ENCODE measurements at regions of chr2 and their contacts with region 1.

Region 1: GRCh38 chr2:112906276-112906675 is 4.7 kb upstream of the IL37 start:
- DNase-seq: no peak
- ATAC-seq: peak; percentile 32; the same call in 1 of the 3 replicates
- H3K4me3 ChIP-seq: no peak overlapping the region
- H3K27ac ChIP-seq: no peak overlapping the region
- H3K4me1 ChIP-seq: no peaks in the 10 kb centered on the region
- H3K27me3 ChIP-seq: no peaks in the 10 kb centered on the region
- CTCF ChIP-seq: no peak
- EP300 ChIP-seq: no peak
- POLR2A ChIP-seq: no peak
- RAD21 ChIP-seq: no peak

Region 2: DNA sequence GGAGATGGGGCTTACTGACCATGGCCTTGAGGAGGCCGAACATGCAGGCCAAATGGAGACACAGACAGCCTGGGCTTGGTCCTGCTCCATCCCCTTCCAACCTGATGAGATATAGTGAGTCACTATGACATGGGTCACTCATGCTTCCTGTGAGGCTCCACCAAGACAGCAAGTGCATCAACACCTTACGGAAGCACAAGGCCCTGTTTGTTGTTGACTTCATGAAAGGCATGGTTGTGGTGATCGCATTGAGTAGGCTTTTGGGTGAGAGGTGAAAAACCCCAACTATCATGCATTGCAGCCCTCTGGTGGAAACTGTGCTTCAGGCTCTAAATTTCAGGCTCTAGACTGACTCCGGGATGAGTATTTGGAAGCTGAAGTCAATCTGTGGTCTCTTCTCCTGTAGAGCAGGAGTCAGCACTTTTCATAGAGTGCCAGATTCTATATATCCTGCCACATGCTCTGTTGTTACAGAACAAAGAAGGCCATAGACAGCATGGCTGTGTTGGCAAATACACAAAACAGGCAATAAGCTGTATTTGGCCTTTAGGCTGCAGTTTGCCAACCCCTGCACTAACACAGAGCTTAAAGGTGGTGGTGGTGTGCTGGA is 14.8 kb after region 1 on chr2:
- CTCF ChIA-PET with region 1: interaction called, 3 read pairs
- POLR2A ChIA-PET with region 1: no interaction called
- RAD21 ChIA-PET with region 1: no interaction called
- SMC1A ChIA-PET with region 1: interaction called, 17 read pairs
- in situ Hi-C with region 1: no loop called
- intact Hi-C with region 1: no loop called
- DNase-seq: no peak
- ATAC-seq: no peak
- H3K4me3 ChIP-seq: no peak overlapping the region
- H3K27ac ChIP-seq: no peak overlapping the region
- H3K4me1 ChIP-seq: peaks cover 5% of the 10 kb centered on the region
- H3K27me3 ChIP-seq: peaks cover 2 to 3% of the 10 kb centered on the region in 2 experiments; a peak in 2 of 4 replicates
- CTCF ChIP-seq: no peak
- EP300 ChIP-seq: no peak
- POLR2A ChIP-seq: no peak
- RAD21 ChIP-seq: no peak

Region 3: DNA sequence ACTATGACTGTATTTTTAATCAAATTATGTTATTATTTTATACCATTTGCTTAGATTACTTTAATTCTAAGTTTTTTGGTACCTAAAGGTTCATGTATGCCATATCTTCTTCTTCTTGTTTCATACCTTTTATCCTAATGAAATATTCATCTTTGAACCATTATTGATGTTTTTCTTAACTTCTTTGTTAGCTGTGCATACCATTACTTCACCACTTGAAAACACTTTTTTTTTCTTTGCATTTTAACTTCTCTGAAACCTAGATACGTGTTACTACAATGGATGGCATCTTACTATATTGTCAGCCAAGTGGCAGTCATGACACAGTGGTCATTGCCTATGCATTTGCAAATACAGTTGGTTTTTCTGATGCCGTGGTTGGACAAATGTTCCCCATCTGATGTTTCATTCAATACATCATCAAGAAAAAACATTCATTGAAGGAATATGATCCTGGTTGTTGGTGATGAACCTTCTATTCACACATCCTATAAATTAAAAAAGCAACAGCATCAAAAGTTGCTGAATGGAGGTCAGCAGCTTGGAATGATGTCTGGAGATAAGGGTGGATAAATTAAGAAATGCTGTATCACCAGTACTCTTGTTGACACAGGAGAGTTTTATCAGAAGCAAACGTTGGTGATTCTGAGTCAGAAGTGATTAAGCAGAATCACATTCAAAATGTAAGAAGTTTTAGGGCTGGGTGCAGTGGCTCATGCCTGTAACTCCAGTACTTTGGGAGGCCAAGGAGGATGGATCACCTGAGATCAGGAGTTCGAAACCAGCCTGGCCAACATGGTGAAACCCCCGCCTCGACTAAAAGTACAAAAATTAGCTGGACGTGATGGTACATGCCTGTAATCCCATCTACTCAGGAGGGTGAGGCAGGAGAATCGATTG is 106.4 kb after region 1 on chr2:
- CTCF ChIA-PET with region 1: no interaction called
- POLR2A ChIA-PET with region 1: no interaction called
- RAD21 ChIA-PET with region 1: no interaction called
- SMC1A ChIA-PET with region 1: no interaction called
- in situ Hi-C with region 1: no loop called
- intact Hi-C with region 1: no loop called
- DNase-seq: no peak
- ATAC-seq: no peak
- H3K4me3 ChIP-seq: no peak overlapping the region
- H3K27ac ChIP-seq: no peak overlapping the region
- H3K4me1 ChIP-seq: no peaks in the 10 kb centered on the region
- H3K27me3 ChIP-seq: no peaks in the 10 kb centered on the region
- CTCF ChIP-seq: no peak
- EP300 ChIP-seq: no peak
- POLR2A ChIP-seq: no peak
- RAD21 ChIP-seq: no peak